Posterior cingulate gyrus (tissue), 11 donors: ENCODE measurements at regions of chr17 and their contacts with region 1.

Region 1: DNA sequence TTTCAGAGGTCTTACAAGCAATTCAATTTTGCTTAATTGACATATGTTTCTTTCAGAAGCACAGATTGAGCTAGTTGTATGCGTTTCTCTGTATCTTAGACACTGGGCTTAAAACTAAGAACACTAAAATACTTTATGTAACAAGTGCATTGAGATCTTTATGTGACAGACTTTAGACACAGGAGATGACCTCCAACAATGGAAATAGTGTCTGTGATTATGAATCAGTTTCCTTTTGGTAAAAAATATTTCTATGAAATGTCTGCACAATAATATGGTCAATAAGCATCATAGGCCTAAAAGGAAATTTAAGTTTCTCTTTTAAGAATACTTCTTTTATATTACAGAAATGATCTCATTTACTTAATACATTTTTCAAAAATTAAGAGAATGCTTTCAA is 153.2 kb downstream of the SKAP1 start:
- DNase-seq: no peak

Region 2: GRCh38 chr17:48219617-48220016 is 57.2 kb before region 1 on chr17:
- intact Hi-C with region 1: loop called (anchors 2 kb)
- DNase-seq: no peak

Region 3: GRCh38 chr17:48322060-48322459 is 45.3 kb after region 1 on chr17:
- intact Hi-C with region 1: no loop called
- DNase-seq: no peak